ENCODE measurements at regions of chr17 and their contacts with region 1.

Region 1: GRCh38 chr17:69501591-69502468 is 87.3 kb downstream of the MAP2K6 start:
- DNase-seq: peak in 1 of 2 donors; percentile 34
- ATAC-seq: peak; percentile 67 to 81 (median 75)
- H3K4me3 ChIP-seq: peak overlapping the region; percentile 64
- H3K27ac ChIP-seq: peak overlapping the region; percentile 87
- H3K4me1 ChIP-seq: peaks cover 68% of the 10 kb centered on the region
- H3K27me3 ChIP-seq: no peaks in the 10 kb centered on the region
- CTCF ChIP-seq: no peak

Region 2: GRCh38 chr17:69335058-69335457 is 166.8 kb before region 1 on chr17:
- intact Hi-C with region 1: loop called in 1 of 2 experiments (anchors 5 kb)
- DNase-seq: no peak
- ATAC-seq: peak; percentile 78 to 90 (median 84)
- H3K4me3 ChIP-seq: peak overlapping the region; percentile 20
- H3K27ac ChIP-seq: peak overlapping the region; percentile 20
- H3K4me1 ChIP-seq: peaks cover under 1% of the 10 kb centered on the region
- H3K27me3 ChIP-seq: no peaks in the 10 kb centered on the region
- CTCF ChIP-seq: peak; percentile 76

Region 3: DNA sequence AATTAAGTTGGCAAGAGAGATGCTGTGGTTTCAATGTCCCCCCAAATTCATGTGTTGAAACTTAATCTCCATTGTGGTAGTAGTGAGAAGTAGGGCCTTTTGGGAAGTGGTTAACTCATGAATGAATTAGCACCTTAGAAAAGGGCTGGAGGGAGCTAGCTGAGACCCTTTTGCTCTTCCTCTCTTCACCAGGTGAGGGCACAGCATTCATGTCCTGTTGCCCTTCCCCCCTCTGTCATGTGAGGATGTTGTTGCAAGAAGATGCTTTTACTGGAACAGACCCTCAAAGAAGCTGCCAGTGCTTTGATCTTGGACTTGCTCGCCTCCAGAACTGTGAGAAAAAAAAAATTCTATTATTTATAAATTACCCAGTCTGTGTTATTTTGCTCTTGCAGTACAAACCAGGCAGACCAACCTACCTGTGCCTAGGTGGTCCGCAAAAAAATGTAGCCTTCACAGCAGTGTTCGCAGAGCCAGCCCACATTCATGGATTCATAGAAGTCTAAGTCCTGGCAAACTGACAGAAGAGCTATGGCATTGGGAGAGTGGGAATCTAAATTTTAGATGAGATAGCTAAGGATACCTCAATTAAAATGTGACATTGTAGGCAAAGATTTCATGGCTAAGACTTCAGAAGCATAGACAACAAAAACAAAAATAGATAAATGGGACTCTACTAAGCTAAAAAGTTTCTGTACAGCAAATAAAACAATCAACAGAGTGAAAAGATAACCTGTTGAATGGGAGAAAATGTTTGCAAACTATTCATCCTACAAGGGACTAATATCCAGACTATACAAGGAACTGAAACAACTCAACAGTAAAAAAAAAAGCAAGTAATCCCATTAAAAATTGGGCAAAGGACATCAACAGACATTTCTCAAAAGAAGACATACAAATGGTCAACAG is 142.9 kb before region 1 on chr17:
- intact Hi-C with region 1: loop called in 1 of 2 experiments (anchors 10 kb)
- DNase-seq: no peak
- ATAC-seq: no peak
- H3K4me3 ChIP-seq: no peak overlapping the region
- H3K27ac ChIP-seq: no peak overlapping the region
- H3K4me1 ChIP-seq: peaks cover 6% of the 10 kb centered on the region
- H3K27me3 ChIP-seq: no peaks in the 10 kb centered on the region
- CTCF ChIP-seq: no peak

Region 4: GRCh38 chr17:69428254-69428980 is 73.4 kb before region 1 on chr17:
- intact Hi-C with region 1: loop called in 1 of 2 experiments (anchors 5 kb)
- DNase-seq: no peak
- ATAC-seq: no peak
- H3K4me3 ChIP-seq: no peak overlapping the region
- H3K27ac ChIP-seq: peak overlapping the region; percentile 43
- H3K4me1 ChIP-seq: peaks cover 33% of the 10 kb centered on the region
- H3K27me3 ChIP-seq: no peaks in the 10 kb centered on the region
- CTCF ChIP-seq: no peak

Region 5: DNA sequence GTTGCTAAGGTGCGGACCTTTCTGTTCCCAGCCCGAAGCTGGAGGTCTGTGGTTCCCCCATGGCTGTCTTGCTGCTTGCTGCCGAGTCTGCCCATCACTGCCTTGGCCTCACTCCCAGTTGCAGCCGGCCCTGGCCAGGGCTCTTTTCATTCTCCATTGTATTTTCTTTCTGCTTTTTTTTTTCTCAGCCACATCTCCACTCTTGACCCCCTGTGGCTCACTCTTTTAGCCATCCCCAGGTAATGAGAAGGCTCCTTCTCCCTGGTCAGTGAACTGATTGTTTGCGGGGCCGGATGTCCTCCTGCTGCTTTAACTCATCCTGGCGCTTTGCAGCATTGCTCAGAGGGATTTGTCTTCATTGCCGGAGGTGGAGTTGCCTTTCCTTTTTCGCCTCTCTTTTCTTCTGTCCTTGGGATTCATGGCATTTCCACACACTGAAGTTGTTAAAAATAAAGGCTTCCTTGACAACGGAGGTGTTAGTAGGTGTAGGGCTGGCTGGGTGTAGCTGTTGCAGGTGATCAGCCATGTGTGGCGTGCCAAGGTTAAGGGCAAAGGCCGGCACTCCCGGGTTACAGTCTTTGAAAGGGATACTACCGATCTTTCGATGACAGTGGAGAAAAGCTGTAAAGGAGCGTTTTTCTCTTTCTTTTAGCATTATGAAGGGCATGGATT is 53.3 kb before region 1 on chr17:
- intact Hi-C with region 1: loop called in 1 of 2 experiments (anchors 5 kb)
- DNase-seq: peak; percentile 41 to 67
- ATAC-seq: peak; percentile 31 to 65 (median 52)
- H3K4me3 ChIP-seq: peak overlapping the region; percentile 58
- H3K27ac ChIP-seq: peak overlapping the region; percentile 72
- H3K4me1 ChIP-seq: peaks cover 49% of the 10 kb centered on the region
- H3K27me3 ChIP-seq: no peaks in the 10 kb centered on the region
- CTCF ChIP-seq: no peak

Region 6: DNA sequence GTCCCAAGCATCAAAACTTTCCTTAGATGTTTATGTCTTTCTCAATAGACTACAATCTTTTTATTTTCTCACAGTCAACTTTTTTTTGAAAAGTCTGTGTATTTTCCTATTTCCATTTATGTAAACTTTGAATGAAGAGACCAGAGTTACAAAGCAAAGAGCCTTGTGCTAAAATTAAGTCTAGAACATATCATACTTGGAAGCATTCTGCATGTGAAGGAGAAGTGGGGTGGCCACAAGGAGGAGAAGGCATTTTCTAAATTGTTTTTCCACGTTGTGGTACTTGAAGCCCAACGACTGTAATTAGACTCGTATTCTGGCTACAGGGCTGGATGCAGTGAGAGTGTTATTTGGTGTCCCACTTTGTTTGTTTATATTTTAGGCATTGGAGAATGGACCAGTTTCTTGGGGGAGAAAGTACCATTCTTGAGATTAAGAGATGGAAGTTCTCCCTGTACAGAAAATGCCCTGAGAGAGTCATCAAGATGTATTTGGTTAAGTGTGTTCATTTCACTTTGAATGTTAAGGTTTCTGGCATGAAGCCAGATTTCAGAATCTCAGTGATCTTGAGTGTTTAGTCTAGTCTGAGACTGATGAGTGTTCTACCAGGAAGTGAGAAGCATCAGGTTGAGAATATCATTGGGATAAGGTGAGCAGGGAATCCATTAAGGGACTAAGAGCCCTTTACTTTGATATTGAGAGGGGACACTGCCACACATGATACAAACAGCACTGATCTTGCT is 15.8 kb before region 1 on chr17:
- intact Hi-C with region 1: loop called in 1 of 2 experiments (anchors 2 kb)
- DNase-seq: no peak
- ATAC-seq: peak; percentile 15 to 40 (median 25)
- H3K4me3 ChIP-seq: peak overlapping the region; percentile 42
- H3K27ac ChIP-seq: peak overlapping the region; percentile 82
- H3K4me1 ChIP-seq: peaks cover 42% of the 10 kb centered on the region
- H3K27me3 ChIP-seq: no peaks in the 10 kb centered on the region
- CTCF ChIP-seq: no peak